ENCODE measurements at regions of chr1 and their contacts with region 1.

Region 1: GRCh38 chr1:28552758-28553663 is at the start of gene TRNAU1AP:
- DNase-seq: peak; percentile 88 to 99 (median 92)

Region 2: GRCh38 chr1:28470146-28470545 is 82.9 kb before region 1 on chr1:
- intact Hi-C with region 1: no loop called
- DNase-seq: no peak

Region 3: DNA sequence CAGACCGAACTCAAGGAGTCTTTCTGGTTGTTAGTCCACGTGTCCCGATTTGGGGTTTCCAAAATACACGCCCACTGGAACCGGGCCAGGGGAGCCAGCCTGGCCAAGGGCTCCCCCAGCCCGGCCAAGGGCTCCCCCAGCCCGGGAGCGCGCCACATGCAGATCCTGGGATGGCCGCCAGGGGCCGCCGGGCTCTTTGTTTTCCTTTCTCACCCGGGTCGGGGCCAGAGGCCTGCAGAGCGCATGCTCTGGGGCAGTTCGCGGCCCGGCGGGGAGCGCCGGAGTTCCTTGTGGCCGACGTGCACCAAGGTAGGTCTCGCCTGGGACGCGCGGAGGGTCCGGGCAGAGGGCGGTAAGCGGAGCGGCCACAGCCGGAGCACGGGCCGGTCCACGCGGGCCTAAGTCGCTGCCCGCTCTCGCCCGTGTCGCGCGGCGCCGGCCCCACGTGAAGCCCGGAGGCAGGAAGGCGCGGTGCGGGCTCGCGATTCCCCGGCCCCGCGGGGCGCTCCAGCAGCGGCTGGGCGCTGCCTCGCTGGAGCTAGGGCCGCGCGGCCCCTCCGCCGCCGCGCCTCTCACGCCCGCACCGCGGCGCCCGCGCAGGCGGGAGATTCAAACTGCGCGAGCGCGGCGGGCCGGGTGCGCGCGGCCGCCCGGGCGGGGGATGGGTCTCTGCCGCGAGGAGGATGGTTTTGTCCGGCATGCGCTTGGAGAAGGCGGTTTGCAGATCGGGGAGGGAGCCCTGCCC is 34.8 kb before region 1 on chr1:
- intact Hi-C with region 1: loop called (anchors 5 kb)
- DNase-seq: peak; percentile 76 to 98 (median 86)

Measured in posterior cingulate gyrus (tissue), 11 donors.